Ovary (tissue), 10 donors: ENCODE measurements at regions of chr11 and their contacts with region 1.

Region 1: DNA sequence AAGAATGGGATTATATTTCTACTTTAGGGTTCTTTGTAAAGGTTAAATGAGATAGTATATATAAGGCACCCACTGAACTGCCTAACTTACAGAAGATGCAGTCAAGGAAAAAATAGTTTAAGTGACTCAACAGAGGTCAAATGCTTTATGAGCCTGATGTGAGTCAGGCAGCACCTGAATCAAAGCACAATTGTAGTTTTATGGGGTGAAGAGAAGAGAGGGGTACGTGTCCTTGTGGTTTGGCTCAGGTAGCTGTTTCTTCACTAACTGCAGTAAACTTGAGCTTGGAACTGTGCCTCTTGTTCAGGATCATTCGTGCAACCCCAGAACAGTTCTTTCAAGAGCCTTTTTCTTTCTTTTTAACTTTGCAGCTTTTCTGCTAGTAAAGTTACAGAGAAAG is 125.2 kb upstream of the SPON1 start:
- DNase-seq: no peak
- H3K4me3 ChIP-seq: no peak overlapping the region
- H3K27ac ChIP-seq: no peak overlapping the region
- H3K4me1 ChIP-seq: no peaks in the 10 kb centered on the region
- H3K27me3 ChIP-seq: no peaks in the 10 kb centered on the region
- CTCF ChIP-seq: no peak
- EP300 ChIP-seq: no peak
- POLR2A ChIP-seq: no peak

Region 2: DNA sequence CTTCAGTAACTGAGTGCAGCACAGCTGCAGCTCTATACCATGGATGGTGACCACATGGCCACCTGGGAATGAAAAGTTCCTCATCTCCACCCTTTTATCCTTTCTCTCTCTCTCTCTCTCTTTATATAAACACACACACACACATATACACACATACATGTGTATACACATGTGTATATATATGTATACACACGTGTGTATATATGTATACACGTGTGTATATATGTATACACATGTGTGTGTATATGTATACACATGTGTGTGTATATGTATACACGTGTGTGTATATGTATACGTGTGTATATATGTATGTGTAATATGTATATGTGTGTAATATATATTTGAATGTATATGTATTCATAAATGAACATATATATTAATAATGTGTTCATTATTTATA is 187.7 kb before region 1 on chr11:
- intact Hi-C with region 1: loop called in 1 of 4 experiments (anchors 5 kb)
- DNase-seq: no peak
- H3K4me3 ChIP-seq: no peak overlapping the region
- H3K27ac ChIP-seq: no peak overlapping the region
- H3K4me1 ChIP-seq: no peaks in the 10 kb centered on the region
- H3K27me3 ChIP-seq: no peaks in the 10 kb centered on the region
- CTCF ChIP-seq: no peak
- EP300 ChIP-seq: no peak
- POLR2A ChIP-seq: no peak